ENCODE measurements at regions of chr2 and their contacts with region 1.

Region 1: GRCh38 chr2:134218930-134219658 is 34.8 kb upstream of the MGAT5 start:
- DNase-seq: peak; percentile 63
- ATAC-seq: no peak
- H3K4me3 Mint-ChIP-seq: peak overlapping the region; percentile 52
- H3K27ac Mint-ChIP-seq: peak overlapping the region; percentile 92
- H3K4me1 Mint-ChIP-seq: peaks cover 71% of the 10 kb centered on the region
- H3K27me3 Mint-ChIP-seq: no peaks in the 10 kb centered on the region
- CTCF ChIP-seq: no peak

Region 2: DNA sequence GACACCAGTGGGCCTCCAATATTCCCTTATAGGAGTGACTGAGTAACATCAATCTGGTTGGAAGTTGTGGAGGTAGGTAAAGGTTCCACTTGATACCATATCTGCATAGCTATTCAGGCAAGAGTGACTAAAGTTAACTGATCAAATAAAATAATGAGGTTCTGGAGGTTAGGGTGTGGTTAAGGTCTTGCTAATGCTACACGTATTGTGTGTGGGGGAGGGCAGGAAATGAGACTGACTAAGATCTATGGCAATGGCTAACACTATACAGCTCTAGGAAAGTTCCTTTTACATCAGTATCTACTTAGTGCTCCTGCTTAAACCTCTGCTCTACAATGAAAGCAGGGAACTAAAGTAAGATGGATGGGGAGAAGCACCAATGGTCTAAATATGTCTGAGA is 114.3 kb before region 1 on chr2:
- CTCF ChIA-PET with region 1: no interaction called
- POLR2A ChIA-PET with region 1: no interaction called
- intact Hi-C with region 1: no loop called
- DNase-seq: peak; percentile 70
- ATAC-seq: peak; percentile 99
- H3K4me3 Mint-ChIP-seq: no peak overlapping the region
- H3K27ac Mint-ChIP-seq: peak overlapping the region; percentile 2
- H3K4me1 Mint-ChIP-seq: peaks cover 14% of the 10 kb centered on the region
- H3K27me3 Mint-ChIP-seq: peaks cover 1% of the 10 kb centered on the region
- CTCF ChIP-seq: no peak

Region 3: DNA sequence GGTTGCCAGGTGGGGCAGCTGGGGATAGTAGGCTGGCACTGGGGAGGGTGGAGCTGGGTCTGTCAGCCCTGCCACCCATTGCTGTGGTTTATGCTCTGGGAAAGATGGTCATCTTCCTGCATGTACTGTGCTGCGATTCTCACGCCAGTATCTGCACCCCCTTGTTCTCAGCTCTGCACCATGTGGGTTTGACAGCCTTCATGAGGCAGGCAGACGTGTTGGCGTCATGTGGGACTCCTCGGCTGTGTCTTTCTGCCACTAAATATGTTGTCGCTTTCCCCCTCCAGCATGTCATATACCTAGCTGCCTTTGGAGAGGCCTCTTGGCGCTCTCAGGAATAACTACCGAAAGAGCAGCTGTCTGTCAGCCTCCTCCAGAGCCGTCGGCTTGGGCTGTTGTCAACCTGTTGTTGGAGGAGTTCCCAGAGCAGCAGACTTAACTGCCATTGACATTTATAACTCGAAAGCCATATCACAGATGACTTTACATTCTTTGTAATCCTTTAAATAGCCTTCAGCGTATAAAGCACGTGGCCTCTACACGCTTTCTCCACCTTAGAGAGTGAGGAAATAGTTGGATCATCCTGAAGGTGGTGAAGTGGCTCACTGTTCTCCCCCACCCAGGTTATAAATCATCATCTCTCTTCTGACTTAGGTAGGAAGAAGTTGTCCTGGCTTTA is 45.6 kb before region 1 on chr2:
- CTCF ChIA-PET with region 1: interaction called, 3 read pairs
- POLR2A ChIA-PET with region 1: interaction called, 3 read pairs
- intact Hi-C with region 1: loop called (anchors 5 kb)
- DNase-seq: no peak
- ATAC-seq: no peak
- H3K4me3 Mint-ChIP-seq: no peak overlapping the region
- H3K27ac Mint-ChIP-seq: no peak overlapping the region
- H3K4me1 Mint-ChIP-seq: peaks cover 61% of the 10 kb centered on the region
- H3K27me3 Mint-ChIP-seq: no peaks in the 10 kb centered on the region
- CTCF ChIP-seq: no peak

Region 4: GRCh38 chr2:134232868-134233727 is 14.0 kb after region 1 on chr2:
- CTCF ChIA-PET with region 1: interaction called, 27 read pairs
- POLR2A ChIA-PET with region 1: interaction called, 10 read pairs
- intact Hi-C with region 1: no loop called
- DNase-seq: no peak
- ATAC-seq: peak; percentile 67
- H3K4me3 Mint-ChIP-seq: peak overlapping the region; percentile 2
- H3K27ac Mint-ChIP-seq: peak overlapping the region; percentile 90
- H3K4me1 Mint-ChIP-seq: peaks cover 78% of the 10 kb centered on the region
- H3K27me3 Mint-ChIP-seq: no peaks in the 10 kb centered on the region
- CTCF ChIP-seq: peak; percentile 19

Region 5: DNA sequence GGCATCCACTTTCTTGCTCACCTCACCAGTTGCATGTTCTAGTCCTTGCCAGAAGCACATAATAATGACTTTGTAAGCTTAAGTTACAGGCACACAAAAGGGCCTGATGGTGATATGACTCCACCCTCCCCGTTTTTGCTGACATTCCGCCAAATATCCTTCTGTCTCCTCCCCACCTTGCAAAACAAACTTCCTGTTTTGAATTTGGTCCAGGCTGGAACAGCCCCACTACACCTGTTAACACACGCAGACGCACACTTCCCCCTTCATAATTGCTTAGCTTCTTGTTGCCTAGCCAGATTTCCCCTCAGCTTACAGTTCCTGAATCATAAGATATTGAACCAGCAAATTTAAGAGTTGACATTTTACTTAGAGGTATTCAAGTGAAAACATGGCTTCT is 34.7 kb after region 1 on chr2 and contains the start of gene MGAT5:
- CTCF ChIA-PET with region 1: interaction called, 3 read pairs
- POLR2A ChIA-PET with region 1: interaction called, 3 read pairs
- intact Hi-C with region 1: loop called (anchors 5 kb)
- DNase-seq: no peak
- ATAC-seq: no peak
- H3K4me3 Mint-ChIP-seq: no peak within 1 kb of the TSS
- H3K27ac Mint-ChIP-seq: peak within 1 kb of the TSS; percentile 18
- H3K4me1 Mint-ChIP-seq: peaks cover 89% of the 10 kb centered on the region
- H3K27me3 Mint-ChIP-seq: no peaks in the 10 kb centered on the region
- CTCF ChIP-seq: no peak
- total RNA-seq, gene MGAT5: 36.9 to 42.2 TPM

Measured in activated CD8-positive, alpha-beta T cell treated with anti-CD3 and anti-CD28 coated beads for 36 hours (primary cell).